H1 (cell line): ENCODE measurements at regions of chr18 and their contacts with region 1.

Region 1: GRCh38 chr18:7164323-7165004 is 46.9 kb upstream of the LAMA1 start:
- DNase-seq: peak in 1 of 2 experiments; percentile 40
- H3K4me3 ChIP-seq: no peak overlapping the region
- H3K27ac ChIP-seq: no peak overlapping the region
- H3K4me1 ChIP-seq: no peaks in the 10 kb centered on the region
- H3K27me3 ChIP-seq: no peaks in the 10 kb centered on the region
- CTCF ChIP-seq: peak; percentile 45 to 55 (median 53)
- EP300 ChIP-seq: no peak
- POLR2A ChIP-seq: no peak
- RAD21 ChIP-seq: peak; percentile 57 to 58

Region 2: GRCh38 chr18:7152440-7152839 is 12.0 kb before region 1 on chr18:
- CTCF ChIA-PET with region 1: interaction called, 11 read pairs
- POLR2A ChIA-PET with region 1: no interaction called
- DNase-seq: no peak
- H3K4me3 ChIP-seq: no peak overlapping the region
- H3K27ac ChIP-seq: no peak overlapping the region
- H3K4me1 ChIP-seq: peaks cover 0 to 2% (median 0%) of the 10 kb centered on the region in 4 experiments; a peak in 1 of 7 replicates
- H3K27me3 ChIP-seq: no peaks in the 10 kb centered on the region
- CTCF ChIP-seq: peak in 1 of 3 experiments; percentile 6; a peak in 1 of 4 replicates
- EP300 ChIP-seq: no peak
- POLR2A ChIP-seq: no peak
- RAD21 ChIP-seq: no peak